ENCODE measurements at regions of chr20 and their contacts with region 1.

Region 1: GRCh38 chr20:401682-402495 is 6.2 kb upstream of the RBCK1 start:
- DNase-seq: peak; percentile 74
- H3K4me3 ChIP-seq: peak overlapping the region; percentile 45
- H3K27ac ChIP-seq: peak overlapping the region; percentile 87
- H3K4me1 ChIP-seq: peaks cover 53% of the 10 kb centered on the region
- CTCF ChIP-seq: no peak

Region 2: GRCh38 chr20:381581-382290 is 20.2 kb before region 1 on chr20:
- CTCF ChIA-PET with region 1: interaction called, 4 read pairs
- POLR2A ChIA-PET with region 1: interaction called, 44 read pairs
- intact Hi-C with region 1: loop called (anchors 2 kb)
- DNase-seq: peak; percentile 92
- H3K4me3 ChIP-seq: peak overlapping the region; percentile 92
- H3K27ac ChIP-seq: peak overlapping the region; percentile 90
- H3K4me1 ChIP-seq: peaks cover 42% of the 10 kb centered on the region
- CTCF ChIP-seq: no peak; the same call in 1 of the 2 replicates

Region 3: GRCh38 chr20:462199-462991 is 60.5 kb after region 1 on chr20 and contains the start of gene TBC1D20:
- CTCF ChIA-PET with region 1: no interaction called
- POLR2A ChIA-PET with region 1: interaction called, 3 read pairs
- intact Hi-C with region 1: loop called (anchors 2 kb)
- DNase-seq: peak; percentile 95
- H3K4me3 ChIP-seq: peak within 1 kb of the TSS; percentile 85
- H3K27ac ChIP-seq: peak within 1 kb of the TSS; percentile 66
- H3K4me1 ChIP-seq: peaks cover 25% of the 10 kb centered on the region
- CTCF ChIP-seq: peak; percentile 60
- total RNA-seq, gene TBC1D20: 20.8 and 22.1 TPM in 2 replicates

Measured in OCI-LY7 (cell line).